CD8-positive, alpha-beta memory T cell (primary cell): ENCODE measurements at regions of chr14 and their contacts with region 1.

Region 1: DNA sequence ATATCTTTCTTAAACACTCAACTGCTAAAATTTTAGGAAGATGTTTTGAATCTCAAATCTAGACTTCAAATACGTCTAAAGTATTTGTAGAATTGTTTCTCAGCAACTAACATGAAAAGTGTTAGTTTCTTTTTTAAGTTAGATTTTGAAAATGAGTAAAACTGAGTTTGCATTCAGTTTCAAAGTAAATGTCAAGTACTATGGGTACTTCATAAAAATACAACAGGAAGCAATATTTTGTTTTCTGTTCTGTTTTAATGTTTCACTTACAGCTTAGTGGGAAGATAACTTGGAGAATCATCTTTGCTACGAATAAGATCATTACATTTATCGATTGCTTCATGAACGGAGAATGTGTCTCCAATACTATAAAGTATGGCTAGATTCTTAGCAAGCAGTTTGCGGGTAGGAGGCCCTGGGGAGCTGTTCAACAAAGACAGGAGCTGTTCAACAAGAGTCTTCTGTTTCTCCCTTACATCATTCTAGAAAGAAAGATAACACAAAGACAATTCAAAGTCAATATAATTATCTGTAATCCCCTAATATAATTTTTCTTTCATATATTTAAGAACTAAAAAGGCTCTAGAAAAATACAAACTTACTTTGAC is 20.2 kb downstream of the HEATR5A start:
- DNase-seq: no peak
- H3K4me3 ChIP-seq: no peak overlapping the region
- H3K4me3 Mint-ChIP-seq: no peak overlapping the region
- H3K27ac ChIP-seq: no peak overlapping the region
- H3K27ac Mint-ChIP-seq: peak overlapping the region in 4 of 8 donors; percentile 3 to 31 (median 6)
- H3K4me1 ChIP-seq: no peaks in the 10 kb centered on the region
- H3K4me1 Mint-ChIP-seq: peaks cover 1 to 8% (median 5%) of the 10 kb centered on the region in 3 donors
- H3K27me3 ChIP-seq: no peaks in the 10 kb centered on the region
- H3K27me3 Mint-ChIP-seq: no peaks in the 10 kb centered on the region

Region 2: GRCh38 chr14:31410048-31410650 is 10.0 kb after region 1 on chr14:
- CTCF ChIA-PET with region 1: no interaction called
- POLR2A ChIA-PET with region 1: interaction called, 10 read pairs
- DNase-seq: no peak
- H3K4me3 ChIP-seq: no peak overlapping the region
- H3K4me3 Mint-ChIP-seq: no peak overlapping the region
- H3K27ac ChIP-seq: no peak overlapping the region
- H3K27ac Mint-ChIP-seq: peak overlapping the region in 5 of 8 donors; percentile 4 to 52 (median 23)
- H3K4me1 ChIP-seq: no peaks in the 10 kb centered on the region
- H3K4me1 Mint-ChIP-seq: peaks cover 10 to 17% (median 12%) of the 10 kb centered on the region in 3 donors
- H3K27me3 ChIP-seq: no peaks in the 10 kb centered on the region
- H3K27me3 Mint-ChIP-seq: no peaks in the 10 kb centered on the region